ENCODE measurements at regions of chr17 and their contacts with region 1.

Region 1: DNA sequence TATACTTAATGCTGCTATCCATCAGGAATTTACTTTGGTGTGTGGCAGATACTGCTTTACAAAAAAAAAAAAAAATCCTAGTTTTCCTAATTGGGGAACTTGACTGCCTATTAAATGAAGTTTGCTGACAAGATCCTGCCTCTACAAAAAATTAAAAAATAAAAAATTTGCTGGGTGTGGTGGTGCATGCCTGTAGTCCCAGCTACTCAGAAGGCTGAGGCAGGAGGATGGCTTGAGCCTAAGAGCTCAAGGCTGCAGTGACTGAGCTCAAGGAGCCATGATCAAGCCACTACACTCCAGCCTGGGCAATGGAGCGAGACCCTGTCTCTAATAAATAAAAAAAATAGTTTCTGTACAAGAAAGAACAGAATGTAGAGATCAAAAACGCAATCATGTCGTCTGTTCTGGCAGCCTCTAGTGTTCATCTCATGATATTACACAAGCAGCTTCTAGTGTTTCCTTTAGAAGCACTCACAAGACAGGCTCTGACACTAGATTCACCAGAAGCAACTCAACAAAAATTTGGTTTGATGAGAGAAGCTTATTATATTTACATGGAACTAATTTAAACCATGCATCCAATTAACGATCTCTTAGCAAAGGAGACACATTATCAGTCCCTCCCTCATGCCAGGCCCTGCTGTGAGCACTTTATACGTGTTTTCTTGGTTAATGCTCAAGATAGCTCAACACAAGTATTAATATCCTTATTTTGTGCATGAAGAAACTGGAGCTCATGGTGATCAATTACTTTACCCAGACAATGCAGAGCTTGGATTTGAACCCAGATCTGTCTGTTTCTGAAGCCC is 6.8 kb upstream of the KRTAP17-1 start:
- DNase-seq: no peak

Region 2: GRCh38 chr17:40980596-40980995 is 341.7 kb before region 1 on chr17:
- intact Hi-C with region 1: loop called in 1 of 2 experiments (anchors 10 kb)
- DNase-seq: peak; percentile 82

Region 3: DNA sequence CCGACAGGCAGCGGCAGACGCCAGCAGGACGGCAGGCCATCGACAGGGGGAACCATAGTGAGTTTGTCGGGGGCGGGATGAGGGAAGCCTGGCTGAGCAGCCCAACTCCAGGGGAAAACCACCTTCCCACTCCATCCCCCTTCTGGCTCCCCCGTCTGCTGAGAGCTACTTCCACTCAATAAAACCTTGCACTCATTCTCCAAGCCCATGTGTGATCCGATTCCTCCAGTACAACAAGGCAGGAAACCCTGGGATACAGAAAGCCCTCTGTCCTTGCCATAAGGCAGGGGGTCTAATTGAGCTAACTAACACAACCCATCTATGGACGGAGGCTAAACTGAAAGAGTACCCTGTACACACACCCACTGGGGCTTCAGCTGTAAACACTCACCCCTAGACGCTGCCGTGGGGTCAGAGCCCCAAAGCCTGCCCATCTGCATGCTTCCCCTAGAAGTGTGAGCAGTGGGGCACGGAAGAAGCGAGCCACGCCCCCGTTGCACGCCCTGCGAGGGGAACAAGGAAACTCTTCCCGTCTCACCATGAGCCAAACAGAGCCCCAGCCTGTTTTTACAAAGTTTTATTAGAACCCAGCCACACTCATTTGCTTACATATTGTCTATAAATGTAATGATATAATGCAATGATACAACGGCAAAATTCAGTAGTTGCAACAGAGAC is 23.7 kb before region 1 on chr17:
- intact Hi-C with region 1: loop called in 1 of 2 experiments (anchors 1 kb)
- DNase-seq: no peak

Region 4: DNA sequence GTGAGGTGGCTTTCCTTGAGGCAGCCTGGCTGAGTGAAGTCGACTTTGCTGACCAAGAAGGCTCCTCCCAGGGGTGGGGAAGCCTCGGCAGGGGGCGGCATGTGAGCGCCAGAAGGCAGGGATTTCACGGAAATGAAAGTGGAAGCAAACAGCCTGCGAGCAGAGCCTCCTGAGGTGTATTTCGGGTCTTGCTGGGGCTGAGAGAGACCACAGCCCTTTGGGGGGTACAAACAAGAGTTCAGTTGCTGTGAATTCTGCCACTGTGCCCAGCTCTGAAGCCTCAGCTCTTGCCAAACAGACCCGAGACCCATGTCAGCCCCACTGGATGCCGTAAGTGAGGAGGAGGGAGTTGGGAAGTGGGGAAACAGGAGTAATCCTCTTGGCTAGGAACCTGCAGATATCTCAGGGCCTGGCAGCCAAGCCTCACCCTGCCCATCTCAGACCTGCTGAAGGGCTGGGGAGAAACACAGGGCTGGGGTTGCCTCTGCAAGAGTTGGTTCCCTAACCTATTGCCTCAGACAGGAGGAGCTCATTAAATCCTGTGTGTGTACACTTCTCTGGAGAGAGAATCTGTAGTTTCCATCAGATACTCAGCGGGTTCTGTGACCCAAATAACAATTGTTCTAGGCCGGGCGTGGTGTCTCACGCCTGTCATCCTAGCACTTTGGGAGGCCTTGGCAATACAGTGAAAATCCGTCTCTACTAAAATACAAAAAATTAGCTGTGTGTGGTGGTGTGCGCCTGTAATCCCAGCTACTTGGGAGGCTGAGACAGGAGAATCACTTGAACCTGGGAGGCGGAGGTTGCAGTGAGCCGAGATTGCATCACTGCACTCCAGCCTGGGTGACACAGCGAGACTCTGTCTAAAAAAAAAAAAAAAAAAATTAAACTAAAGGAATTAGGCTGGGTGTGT is 1684.6 kb after region 1 on chr17 and contains the start of gene IFI35:
- intact Hi-C with region 1: no loop called
- DNase-seq: peak; percentile 95
- total RNA-seq, gene IFI35: 23.9 to 24.1 TPM